ENCODE measurements at regions of chr3 and their contacts with region 1.

Region 1: DNA sequence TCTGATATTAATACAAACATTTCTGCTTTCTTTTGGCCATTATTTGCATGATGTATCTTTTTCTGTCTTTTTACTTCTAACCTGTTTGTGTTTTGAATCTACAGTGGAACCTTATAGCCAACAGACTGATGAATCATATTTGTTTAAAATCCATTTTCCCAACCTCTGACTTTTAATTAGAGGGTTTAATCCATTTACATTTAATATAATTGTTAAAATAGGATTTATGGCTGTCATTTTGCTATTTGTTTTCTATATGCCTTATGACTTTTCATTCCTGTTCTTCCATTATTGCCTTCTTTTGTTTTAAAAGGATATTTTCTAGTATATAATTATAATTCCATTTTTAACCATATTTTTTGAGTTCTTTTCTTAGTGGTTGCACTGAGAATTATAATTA is 286.1 kb downstream of the ZNF621 start:
- DNase-seq: no peak
- ATAC-seq: no peak
- H3K4me3 ChIP-seq: no peak overlapping the region
- H3K27ac ChIP-seq: no peak overlapping the region
- H3K4me1 ChIP-seq: no peaks in the 10 kb centered on the region
- H3K27me3 ChIP-seq: no peaks in the 10 kb centered on the region
- CTCF ChIP-seq: no peak
- POLR2A ChIP-seq: no peak
- RAD21 ChIP-seq: no peak

Region 2: GRCh38 chr3:39819899-39820298 is 990.9 kb before region 1 on chr3:
- CTCF ChIA-PET with region 1: no interaction called
- POLR2A ChIA-PET with region 1: no interaction called
- RAD21 ChIA-PET with region 1: no interaction called
- intact Hi-C with region 1: loop called (anchors 5 kb)
- DNase-seq: no peak
- ATAC-seq: no peak
- H3K4me3 ChIP-seq: no peak overlapping the region
- H3K27ac ChIP-seq: no peak overlapping the region
- H3K4me1 ChIP-seq: no peaks in the 10 kb centered on the region
- H3K27me3 ChIP-seq: no peaks in the 10 kb centered on the region; the same call in 1 of the 2 replicates
- CTCF ChIP-seq: no peak
- POLR2A ChIP-seq: no peak
- RAD21 ChIP-seq: no peak